ENCODE measurements at regions of chr6 and their contacts with region 1.

Region 1: DNA sequence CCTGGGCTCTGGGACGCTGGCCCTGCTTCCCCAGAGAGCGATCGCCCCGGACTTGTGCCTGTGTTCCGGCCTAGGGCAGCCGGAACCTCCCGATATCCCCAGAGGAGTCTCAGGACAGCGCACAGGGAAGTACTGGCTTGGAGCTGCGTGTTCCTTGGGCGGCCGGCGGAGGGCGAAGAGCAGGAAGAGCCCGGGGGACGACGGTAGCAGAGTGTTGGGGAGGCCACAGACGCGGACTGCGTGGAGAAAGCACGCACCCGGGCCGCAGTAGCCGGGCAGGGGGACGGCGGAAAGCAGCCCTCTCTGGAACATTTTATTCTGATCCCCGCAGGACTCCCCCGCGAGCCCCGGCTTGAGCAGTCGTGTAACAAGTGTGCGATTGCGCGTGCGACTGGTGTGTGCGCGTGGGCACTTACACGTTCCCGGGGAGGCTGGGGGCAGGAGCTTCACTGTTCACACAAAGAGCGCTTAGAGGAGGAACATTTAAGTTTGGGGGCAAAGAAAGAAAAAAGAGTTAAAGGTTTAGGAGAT is 36.1 kb downstream of the NCR2 start:
- DNase-seq: peak; percentile 69

Region 2: GRCh38 chr6:41591859-41592502 is 220.5 kb after region 1 on chr6:
- in situ Hi-C with region 1: loop called (anchors 10 kb)
- DNase-seq: peak; percentile 88

Region 3: GRCh38 chr6:41675176-41675770 is 303.7 kb after region 1 on chr6:
- in situ Hi-C with region 1: loop called (anchors 10 kb)
- DNase-seq: no peak

Measured in KBM-7 (cell line).